Posterior cingulate gyrus (tissue), 11 donors: ENCODE measurements at regions of chr7 and their contacts with region 1.

Region 1: DNA sequence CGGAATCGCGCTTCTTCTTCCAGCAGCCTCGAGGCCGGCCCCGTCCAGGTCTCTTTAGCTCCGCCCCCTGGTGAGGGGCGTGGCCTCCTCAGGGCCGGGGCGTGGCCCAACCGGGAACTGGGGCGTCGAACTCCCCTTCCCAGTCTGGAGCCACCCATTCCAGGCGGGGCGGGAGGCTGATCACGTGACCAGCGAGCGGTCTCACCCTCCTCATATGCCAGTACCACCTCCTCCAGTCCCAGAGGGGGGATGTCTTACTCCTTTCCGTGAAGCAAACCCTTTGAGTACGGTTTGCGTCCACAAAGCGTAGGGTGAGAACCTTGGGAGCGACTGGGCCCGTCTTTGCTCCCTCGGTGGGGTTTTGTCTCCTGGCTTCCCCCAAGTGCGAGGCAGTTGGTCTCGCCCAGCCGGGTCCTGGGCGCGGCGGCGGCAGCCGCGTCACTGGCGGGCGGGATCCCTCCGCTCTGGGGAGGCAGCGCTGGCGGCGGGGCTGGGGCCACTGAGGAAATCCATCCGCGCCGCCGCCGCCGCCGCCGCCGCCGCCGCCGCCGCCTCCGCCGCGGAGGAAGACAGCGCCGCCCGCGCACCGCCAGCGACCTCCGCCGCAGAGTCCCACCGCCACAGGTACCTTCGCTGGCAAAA is at the start of gene GNB2:
- DNase-seq: peak; percentile 99 to 100 (median 99)

Region 2: DNA sequence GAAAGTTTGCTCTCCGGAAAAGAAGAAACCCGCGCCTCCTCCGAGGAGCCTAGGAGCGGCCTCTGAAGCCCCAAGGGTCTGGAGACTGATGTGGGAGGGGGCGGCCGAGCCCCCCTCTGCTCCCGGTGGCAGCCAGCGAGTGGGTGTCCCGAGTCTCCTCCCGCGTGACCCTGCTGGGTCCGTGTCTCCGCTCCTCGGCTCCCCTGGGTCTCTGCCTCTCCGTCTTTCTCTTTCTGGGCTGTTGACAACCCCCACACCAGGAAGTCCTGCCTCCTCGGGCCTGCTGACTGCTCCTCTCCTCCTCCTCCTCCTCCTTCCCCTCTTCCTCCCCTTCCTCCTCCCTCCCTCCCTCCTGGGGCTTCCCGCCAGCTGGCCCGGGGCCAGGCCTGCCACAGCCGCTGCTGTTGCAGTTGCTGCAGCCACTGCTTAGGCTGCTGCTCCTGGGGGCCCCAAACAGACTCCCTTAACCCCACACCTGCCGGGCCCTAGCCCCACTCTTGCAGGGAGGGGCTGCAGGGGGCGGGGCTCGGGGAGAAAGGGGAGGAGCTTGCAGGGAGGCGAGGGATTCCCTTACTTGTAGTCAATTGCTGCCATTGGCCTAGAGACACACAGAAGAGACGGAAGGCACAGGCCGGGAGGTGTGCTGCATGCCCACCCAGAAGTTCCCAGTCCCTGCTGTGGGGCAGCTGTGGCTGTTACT is 194.3 kb before region 1 on chr7 and contains the start of gene TSC22D4:
- intact Hi-C with region 1: loop called (anchors 10 kb)
- DNase-seq: peak; percentile 93 to 100 (median 96)

Region 3: GRCh38 chr7:100556541-100556940 is 116.9 kb before region 1 on chr7:
- intact Hi-C with region 1: no loop called
- DNase-seq: no peak

Region 4: DNA sequence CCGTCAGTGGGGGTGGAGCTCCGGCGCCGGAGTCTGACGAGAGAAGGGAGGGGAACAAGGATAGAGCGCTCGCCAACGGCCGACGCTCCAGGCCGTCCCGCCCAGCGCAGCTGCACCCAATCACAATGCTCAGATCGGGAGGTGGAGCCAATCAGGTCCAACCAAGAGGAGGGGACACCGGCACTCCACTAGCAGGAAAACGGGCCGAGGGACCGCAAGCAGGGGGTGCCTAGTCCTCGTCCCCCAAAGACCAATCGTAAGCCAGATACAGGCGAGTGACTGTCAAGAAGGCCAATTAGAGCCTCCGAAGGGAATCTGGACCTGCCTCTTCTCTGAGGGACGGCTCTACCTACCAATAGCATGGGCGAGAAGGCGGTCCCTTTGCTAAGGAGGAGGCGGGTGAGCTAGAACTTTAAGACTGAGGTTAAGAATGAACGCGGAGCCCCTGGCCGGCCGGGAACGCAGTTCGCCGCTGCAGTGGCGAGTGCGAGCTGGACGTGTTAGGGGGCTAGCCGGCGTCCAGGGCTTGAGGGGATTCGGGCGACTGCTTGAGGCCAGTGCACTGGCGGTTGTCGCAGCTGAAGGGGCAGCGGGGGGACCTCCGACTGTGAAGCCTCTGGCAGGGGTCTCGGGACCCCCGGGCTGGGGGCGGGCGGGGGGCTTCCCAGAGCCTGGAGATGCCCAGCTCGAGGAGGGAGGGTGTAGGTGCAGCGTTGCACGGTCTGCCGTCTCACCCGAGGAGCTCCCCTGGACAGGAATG is 87.0 kb before region 1 on chr7 and contains the start of gene FBXO24:
- intact Hi-C with region 1: loop called (anchors 5 kb)
- DNase-seq: peak; percentile 99 to 100 (median 100)

Region 5: DNA sequence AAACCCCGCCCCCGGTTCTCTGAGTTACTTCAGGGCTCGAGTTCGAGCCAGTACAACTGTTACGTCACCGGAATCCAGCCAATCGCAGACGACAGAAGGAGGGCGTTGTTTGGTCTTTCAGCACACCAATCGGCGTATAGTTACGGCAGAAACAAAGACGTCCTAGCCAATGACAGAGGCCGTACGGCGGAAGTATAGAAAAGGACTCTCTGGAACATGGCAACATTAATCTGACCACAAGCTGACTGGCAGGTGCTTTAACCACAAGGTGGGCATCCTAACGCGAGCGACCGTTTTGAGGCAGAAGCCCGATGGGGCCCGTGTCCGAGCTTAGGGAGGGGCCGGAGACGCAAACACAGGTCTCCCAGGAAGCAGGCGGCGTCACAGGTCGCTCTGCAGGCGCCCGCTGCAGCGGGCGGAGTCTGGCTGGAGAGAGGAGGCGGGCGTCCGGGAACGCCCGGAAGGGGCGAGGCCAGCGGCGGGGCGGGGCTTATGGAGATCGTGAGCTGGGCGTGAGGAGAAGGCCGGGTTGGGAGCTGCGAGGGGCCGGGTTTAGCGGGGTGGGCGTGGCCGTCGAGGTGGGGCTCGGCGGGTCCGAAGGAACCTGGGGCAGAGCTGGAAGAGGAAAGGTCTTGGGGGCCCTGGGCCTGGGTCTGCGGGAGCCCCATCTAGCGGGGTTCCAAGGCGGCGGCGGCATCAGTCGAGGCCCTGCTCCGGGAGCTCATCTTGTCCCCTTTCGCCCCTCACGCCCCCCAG is 61.3 kb before region 1 on chr7 and contains the start of gene MOSPD3:
- intact Hi-C with region 1: loop called (anchors 5 kb)
- DNase-seq: peak; percentile 97 to 100 (median 98)

Region 6: DNA sequence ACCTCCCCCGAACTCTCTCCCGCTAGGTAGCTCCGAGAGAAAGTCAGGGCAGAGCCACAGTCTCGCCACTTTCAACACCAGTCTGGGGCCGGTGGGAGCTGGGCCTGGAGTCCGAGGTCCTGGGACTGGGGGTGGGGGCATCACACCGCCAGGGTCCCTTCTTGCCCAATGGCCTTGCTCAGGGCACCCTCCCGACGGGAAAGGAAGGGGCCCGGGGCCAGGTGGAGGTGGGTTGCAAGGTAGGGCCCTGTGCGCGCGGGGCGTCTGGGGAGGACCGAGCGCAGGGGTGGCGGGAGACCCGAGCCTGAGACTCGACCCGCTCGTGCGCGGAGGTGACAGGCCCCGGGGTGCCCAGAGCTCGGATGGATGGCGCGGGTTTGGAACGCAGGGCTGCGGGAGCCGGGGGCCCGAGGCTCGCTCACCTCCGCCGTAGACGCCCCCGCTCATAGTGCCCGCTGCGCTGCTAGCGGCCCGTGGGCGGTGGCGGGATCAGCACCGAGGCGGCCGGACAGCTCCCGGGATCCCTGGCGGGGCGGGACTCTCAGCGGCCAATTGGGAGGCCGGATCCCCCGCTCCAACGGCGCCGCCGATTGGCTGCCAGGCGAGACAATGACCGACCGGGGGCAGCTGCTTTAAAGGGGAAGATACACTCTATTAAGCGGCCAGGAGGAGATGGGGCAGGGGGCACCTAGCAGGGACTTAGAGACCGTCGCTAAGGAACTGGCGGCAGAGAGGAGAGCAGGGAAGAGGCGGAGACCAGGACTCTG is 17.3 kb before region 1 on chr7 and contains the start of gene ACTL6B:
- intact Hi-C with region 1: loop called (anchors 2 kb)
- DNase-seq: peak; percentile 53 to 98 (median 88)